Activated T-helper 2 cell treated with anti-CD3 and anti-CD28 coated beads, Interferon-gamma antibody, Interleukin-2, Interleukin-4, amounts not matched to agents 10 μg/mL and 5 μg/mL and 100 μg/mL, durations not matched to agents 14 hours and 24 hours and 36 hours (primary cell): ENCODE measurements at regions of chr2 and their contacts with region 1.

Region 1: GRCh38 chr2:24792874-24793760 is at the starts of genes CENPO and PTRHD1:
- DNase-seq: peak; percentile 93
- H3K4me3 Mint-ChIP-seq: peak within 1 kb of the TSS; percentile 95
- H3K27ac Mint-ChIP-seq: peak within 1 kb of the TSS; percentile 99
- H3K4me1 Mint-ChIP-seq: peaks cover 38% of the 10 kb centered on the region
- H3K27me3 Mint-ChIP-seq: no peaks in the 10 kb centered on the region
- total RNA-seq, gene CENPO: 41.8 and 46.4 TPM in 2 replicates
- total RNA-seq, gene PTRHD1: 25.9 and 26.6 TPM in 2 replicates

Region 2: GRCh38 chr2:24521975-24522639 is 271.0 kb before region 1 on chr2:
- intact Hi-C with region 1: loop called (anchors 1 kb)
- DNase-seq: no peak
- H3K4me3 Mint-ChIP-seq: no peak overlapping the region
- H3K27ac Mint-ChIP-seq: peak overlapping the region; percentile 84
- H3K4me1 Mint-ChIP-seq: peaks cover 39% of the 10 kb centered on the region
- H3K27me3 Mint-ChIP-seq: no peaks in the 10 kb centered on the region

Region 3: DNA sequence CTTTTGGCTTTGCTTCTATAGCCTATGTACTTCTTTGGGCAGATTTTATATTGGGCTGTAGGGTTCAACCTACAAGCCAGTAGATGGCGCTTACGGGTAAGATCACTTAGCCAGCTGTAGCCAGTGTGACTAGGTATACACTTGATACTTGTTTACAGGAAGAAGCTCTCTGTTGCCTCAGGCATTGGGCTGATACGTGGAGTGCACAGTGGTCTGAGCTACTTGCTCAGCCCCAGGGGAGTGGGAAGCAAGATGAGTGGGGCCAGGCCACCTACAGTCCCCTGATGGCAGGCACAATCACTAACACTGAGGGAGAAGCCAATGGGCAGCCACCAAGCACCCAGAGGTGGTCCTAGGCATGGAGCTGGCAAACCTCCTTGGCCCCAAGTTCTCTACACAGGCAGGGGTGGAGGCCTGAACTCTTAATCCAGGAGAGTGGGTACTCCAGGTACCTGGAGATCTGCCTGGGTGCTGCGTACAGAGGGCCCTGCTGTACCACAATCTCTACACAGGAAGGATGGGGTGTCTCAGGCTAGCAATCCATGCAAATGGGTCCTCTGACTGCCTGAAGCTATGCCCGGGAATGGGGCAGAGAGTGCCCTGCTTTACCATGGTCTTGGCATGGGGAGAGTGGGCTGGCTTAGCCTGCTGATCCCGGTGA is 179.8 kb before region 1 on chr2:
- intact Hi-C with region 1: loop called (anchors 10 kb)
- DNase-seq: peak; percentile 30
- H3K4me3 Mint-ChIP-seq: no peak overlapping the region
- H3K27ac Mint-ChIP-seq: peak overlapping the region; percentile 76
- H3K4me1 Mint-ChIP-seq: peaks cover 12% of the 10 kb centered on the region
- H3K27me3 Mint-ChIP-seq: no peaks in the 10 kb centered on the region

Region 4: DNA sequence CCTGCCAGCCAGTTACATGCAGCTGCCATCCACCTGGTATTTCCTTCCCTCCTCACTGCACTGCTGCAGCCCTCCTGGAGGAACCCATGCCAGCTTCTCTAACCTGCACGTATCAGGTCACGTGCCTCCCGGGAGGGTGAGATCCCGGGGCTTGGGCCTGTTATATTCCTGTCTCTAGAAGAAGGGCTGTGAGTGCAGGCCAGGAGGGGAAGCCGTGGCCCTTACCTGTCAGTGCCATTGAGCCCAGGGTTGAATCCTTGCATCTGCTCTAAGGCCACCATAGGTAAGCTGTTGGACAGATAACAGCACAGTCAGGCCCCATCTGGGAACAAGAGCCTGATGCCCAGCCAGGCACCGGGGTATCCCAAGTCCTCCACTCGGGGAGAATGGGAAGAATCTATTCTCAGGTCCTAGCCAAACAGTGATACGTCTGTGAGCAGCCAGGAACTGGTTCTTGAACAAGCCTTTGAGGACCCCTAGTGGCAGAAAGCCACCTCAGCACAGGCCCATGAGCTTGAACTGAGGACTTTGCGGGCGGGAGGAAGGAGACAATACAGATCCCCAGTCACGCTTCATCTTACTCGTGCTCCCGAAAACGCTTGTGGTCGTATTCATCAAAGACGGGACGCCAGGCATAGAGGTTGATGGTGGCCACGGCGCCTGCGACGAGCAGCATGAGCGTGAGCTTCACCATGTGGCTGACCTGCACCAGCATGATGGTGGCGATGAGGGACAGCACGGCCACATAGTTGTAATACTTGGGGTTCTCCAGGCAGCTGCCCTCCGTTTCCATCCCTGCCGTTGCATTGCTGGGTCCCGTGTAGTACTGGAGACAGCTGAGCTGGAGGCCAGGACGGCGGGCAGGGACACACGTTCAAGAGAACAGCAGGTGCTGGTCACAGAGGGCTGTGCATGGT is 34.5 kb after region 1 on chr2:
- intact Hi-C with region 1: loop called (anchors 1 kb)
- DNase-seq: peak; percentile 61
- H3K4me3 Mint-ChIP-seq: no peak overlapping the region
- H3K27ac Mint-ChIP-seq: peak overlapping the region; percentile 93
- H3K4me1 Mint-ChIP-seq: peaks cover 21% of the 10 kb centered on the region
- H3K27me3 Mint-ChIP-seq: no peaks in the 10 kb centered on the region